CD8-positive, alpha-beta T cell (primary cell): ENCODE measurements at regions of chr4 and their contacts with region 1.

Region 1: GRCh38 chr4:152850377-152850776 is 70.6 kb downstream of the ARFIP1 start:
- DNase-seq: peak in 7 of 9 experiments; percentile 18 to 57 (median 33)
- ATAC-seq: peak; percentile 69
- H3K4me3 ChIP-seq: no peak overlapping the region
- H3K4me3 Mint-ChIP-seq: no peak overlapping the region
- H3K27ac ChIP-seq: no peak overlapping the region
- H3K27ac Mint-ChIP-seq: no peak overlapping the region
- H3K4me1 ChIP-seq: peaks cover 4% of the 10 kb centered on the region
- H3K4me1 Mint-ChIP-seq: peaks cover 24% of the 10 kb centered on the region
- H3K27me3 ChIP-seq: no peaks in the 10 kb centered on the region
- H3K27me3 Mint-ChIP-seq: no peaks in the 10 kb centered on the region
- CTCF ChIP-seq: no peak

Region 2: DNA sequence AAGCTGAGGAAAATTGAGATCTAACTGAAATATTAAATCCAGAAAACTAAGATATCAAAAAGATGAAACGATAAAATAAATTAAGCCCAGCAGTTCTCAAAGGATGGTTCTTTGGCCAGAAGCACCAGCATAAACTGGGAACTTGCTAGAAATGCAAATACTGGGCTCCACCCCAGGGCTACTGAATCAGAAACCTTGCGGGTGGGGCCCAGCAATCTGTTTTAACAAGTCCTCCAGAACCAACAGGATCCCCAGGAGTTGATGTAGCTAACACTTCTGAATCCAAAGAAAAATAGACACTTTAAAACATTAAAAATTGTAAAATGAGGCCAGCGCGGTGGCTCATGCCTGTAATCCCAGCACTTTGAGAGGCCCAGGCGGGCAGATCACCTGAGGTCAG is 156.5 kb before region 1 on chr4:
- CTCF ChIA-PET with region 1: no interaction called
- POLR2A ChIA-PET with region 1: no interaction called
- intact Hi-C with region 1: loop called in 1 of 2 experiments (anchors 2 kb)
- DNase-seq: no peak
- ATAC-seq: no peak
- H3K4me3 ChIP-seq: no peak overlapping the region
- H3K4me3 Mint-ChIP-seq: no peak overlapping the region
- H3K27ac ChIP-seq: no peak overlapping the region
- H3K27ac Mint-ChIP-seq: no peak overlapping the region
- H3K4me1 ChIP-seq: no peaks in the 10 kb centered on the region
- H3K4me1 Mint-ChIP-seq: peaks cover 9% of the 10 kb centered on the region
- H3K27me3 ChIP-seq: no peaks in the 10 kb centered on the region
- H3K27me3 Mint-ChIP-seq: no peaks in the 10 kb centered on the region
- CTCF ChIP-seq: no peak

Region 3: DNA sequence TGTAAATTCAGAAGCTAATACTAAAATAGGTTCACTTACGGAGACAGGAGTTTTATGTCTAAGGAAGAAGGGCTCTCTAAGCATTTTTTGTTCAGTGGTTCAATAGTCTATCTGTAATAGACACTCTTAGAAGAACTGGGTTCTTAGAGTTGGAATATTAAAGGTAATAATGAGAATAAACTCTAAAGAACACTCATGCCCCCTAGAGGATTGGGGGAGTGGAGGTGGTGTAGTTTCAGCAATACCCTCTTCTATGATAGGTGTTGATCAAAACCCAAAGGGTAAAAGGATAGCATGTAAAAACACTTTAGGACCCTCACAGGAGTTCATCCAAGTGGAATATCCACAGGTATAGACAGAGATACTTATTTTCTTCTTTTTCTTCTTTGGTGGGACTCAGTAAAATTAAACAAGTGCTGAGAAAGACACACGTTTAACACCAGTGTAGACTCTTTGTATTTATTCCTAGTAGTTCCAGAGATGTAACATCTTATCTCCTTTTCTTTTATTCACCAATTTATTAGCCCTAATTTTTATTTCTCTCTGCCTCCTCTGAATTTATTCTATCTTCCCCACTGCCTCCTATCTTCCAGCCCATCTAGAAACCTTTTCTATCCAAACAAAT is 468.4 kb after region 1 on chr4:
- CTCF ChIA-PET with region 1: no interaction called
- POLR2A ChIA-PET with region 1: no interaction called
- intact Hi-C with region 1: loop called (anchors 1 to 2 kb)
- DNase-seq: peak in 3 of 9 experiments; percentile 6 to 53 (median 35)
- ATAC-seq: no peak
- H3K4me3 ChIP-seq: no peak overlapping the region
- H3K4me3 Mint-ChIP-seq: no peak overlapping the region
- H3K27ac ChIP-seq: no peak overlapping the region
- H3K27ac Mint-ChIP-seq: no peak overlapping the region
- H3K4me1 ChIP-seq: no peaks in the 10 kb centered on the region
- H3K4me1 Mint-ChIP-seq: no peaks in the 10 kb centered on the region
- H3K27me3 ChIP-seq: peaks cover 0 to 2% of the 10 kb centered on the region in 2 experiments
- H3K27me3 Mint-ChIP-seq: no peaks in the 10 kb centered on the region
- CTCF ChIP-seq: no peak

Region 4: GRCh38 chr4:153643406-153644383 is 793.3 kb after region 1 on chr4:
- CTCF ChIA-PET with region 1: no interaction called
- POLR2A ChIA-PET with region 1: no interaction called
- intact Hi-C with region 1: loop called in 1 of 2 experiments (anchors 5 kb)
- DNase-seq: peak in 2 of 9 experiments; percentile 63 to 75
- ATAC-seq: peak; percentile 99
- H3K4me3 ChIP-seq: no peak overlapping the region
- H3K4me3 Mint-ChIP-seq: no peak overlapping the region
- H3K27ac ChIP-seq: no peak overlapping the region
- H3K27ac Mint-ChIP-seq: peak overlapping the region; percentile 49
- H3K4me1 ChIP-seq: no peaks in the 10 kb centered on the region
- H3K4me1 Mint-ChIP-seq: peaks cover 3% of the 10 kb centered on the region
- H3K27me3 ChIP-seq: no peaks in the 10 kb centered on the region
- H3K27me3 Mint-ChIP-seq: no peaks in the 10 kb centered on the region
- CTCF ChIP-seq: peak; percentile 62